Dendritic cell treated with granulocyte-macrophage colony-stimulating factor and Interleukin-4, amounts not matched to agents 40 ng/mL and 50 ng/mL, for 4 days (primary cell): ENCODE measurements at regions of chr3 and their contacts with region 1.

Region 1: DNA sequence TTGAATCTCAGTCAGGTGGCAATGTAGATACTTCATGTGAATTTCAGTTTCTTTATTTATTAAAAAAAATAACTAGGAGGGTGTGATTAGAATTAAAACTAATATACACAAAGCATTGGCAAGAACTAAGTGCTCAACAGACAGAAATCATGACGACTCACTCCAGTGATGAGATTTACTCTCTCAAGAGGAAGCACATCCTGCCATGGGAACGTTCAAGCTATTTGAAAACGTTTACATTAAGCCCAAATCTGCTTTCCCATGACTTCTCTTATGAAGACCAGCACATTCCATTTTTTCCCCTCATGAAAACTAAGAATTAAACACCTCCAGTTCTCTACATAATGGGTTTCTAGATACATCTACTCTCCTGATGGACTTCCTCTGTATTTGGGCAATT is 8.5 kb downstream of the WDR53 start:
- H3K4me3 Mint-ChIP-seq: no peak overlapping the region
- H3K27ac Mint-ChIP-seq: no peak overlapping the region
- H3K4me1 Mint-ChIP-seq: peaks cover 5% of the 10 kb centered on the region
- H3K27me3 Mint-ChIP-seq: no peaks in the 10 kb centered on the region

Region 2: GRCh38 chr3:196537319-196537984 is 22.4 kb before region 1 on chr3:
- intact Hi-C with region 1: loop called (anchors 1 kb)
- H3K4me3 Mint-ChIP-seq: no peak overlapping the region
- H3K27ac Mint-ChIP-seq: no peak overlapping the region
- H3K4me1 Mint-ChIP-seq: peaks cover 9% of the 10 kb centered on the region
- H3K27me3 Mint-ChIP-seq: no peaks in the 10 kb centered on the region